Dorsolateral prefrontal cortex (tissue), 120 donors: ENCODE measurements at regions of chr12 and their contacts with region 1.

Region 1: GRCh38 chr12:14854586-14855183 is 11.4 kb upstream of the ART4 start:
- DNase-seq: no peak
- H3K4me3 ChIP-seq: no peak overlapping the region
- H3K27ac ChIP-seq: no peak overlapping the region
- H3K27me3 ChIP-seq: no peaks in the 10 kb centered on the region
- CTCF ChIP-seq: no peak

Region 2: GRCh38 chr12:14756334-14757143 is 98.1 kb before region 1 on chr12:
- intact Hi-C with region 1: no loop called
- DNase-seq: no peak
- H3K4me3 ChIP-seq: no peak overlapping the region
- H3K27ac ChIP-seq: no peak overlapping the region
- H3K27me3 ChIP-seq: no peaks in the 10 kb centered on the region
- CTCF ChIP-seq: peak in 13 of 56 donors; percentile 11 to 32 (median 23)

Region 3: DNA sequence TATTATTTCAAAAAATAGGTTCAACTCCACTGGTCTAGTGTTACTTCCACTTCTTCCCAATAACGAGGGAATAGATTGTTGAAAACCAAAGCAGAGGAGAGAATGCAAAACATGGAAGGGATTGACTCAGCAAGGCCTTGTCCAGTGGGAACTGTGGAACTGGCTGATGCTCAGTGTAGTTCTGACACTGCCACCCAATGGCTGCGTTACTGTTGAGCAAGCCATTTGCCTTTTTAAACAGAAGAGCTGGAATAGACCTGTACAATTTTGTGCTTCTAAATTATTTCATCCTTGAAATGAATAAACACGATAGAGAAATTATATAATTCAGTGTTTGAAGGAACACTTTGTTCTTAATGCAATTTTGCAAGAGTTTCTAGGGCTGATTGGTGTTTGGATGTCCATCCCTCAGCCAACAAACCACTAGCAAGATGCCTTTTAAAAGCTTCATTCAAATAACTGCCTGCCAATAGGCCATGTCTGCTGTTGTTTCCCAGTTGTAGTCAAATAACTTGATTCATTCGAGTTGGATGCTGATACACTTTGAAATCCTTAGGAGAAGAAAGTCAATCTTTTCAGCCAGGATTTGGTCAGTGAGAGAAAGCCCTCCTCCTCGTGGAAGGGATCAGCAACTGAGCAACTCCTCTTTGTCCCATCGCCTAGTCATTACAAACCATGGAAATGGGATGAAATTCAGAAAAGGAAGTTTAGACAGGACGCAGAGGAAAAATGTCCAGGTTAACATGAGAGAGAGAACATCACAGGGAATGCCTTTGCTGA is 38.2 kb after region 1 on chr12:
- intact Hi-C with region 1: loop called in 1 of 2 experiments (anchors 5 kb)
- DNase-seq: peak in 4 of 10 donors; percentile 15 to 55 (median 42)
- H3K4me3 ChIP-seq: no peak overlapping the region
- H3K27ac ChIP-seq: peak overlapping the region in 41 of 59 donors; percentile 4 to 74 (median 42)
- H3K27me3 ChIP-seq: no peaks in the 10 kb centered on the region
- CTCF ChIP-seq: peak in 33 of 56 donors; percentile 5 to 63 (median 24)